CD8-positive, alpha-beta T cell (primary cell): ENCODE measurements at regions of chr5 and their contacts with region 1.

Region 1: DNA sequence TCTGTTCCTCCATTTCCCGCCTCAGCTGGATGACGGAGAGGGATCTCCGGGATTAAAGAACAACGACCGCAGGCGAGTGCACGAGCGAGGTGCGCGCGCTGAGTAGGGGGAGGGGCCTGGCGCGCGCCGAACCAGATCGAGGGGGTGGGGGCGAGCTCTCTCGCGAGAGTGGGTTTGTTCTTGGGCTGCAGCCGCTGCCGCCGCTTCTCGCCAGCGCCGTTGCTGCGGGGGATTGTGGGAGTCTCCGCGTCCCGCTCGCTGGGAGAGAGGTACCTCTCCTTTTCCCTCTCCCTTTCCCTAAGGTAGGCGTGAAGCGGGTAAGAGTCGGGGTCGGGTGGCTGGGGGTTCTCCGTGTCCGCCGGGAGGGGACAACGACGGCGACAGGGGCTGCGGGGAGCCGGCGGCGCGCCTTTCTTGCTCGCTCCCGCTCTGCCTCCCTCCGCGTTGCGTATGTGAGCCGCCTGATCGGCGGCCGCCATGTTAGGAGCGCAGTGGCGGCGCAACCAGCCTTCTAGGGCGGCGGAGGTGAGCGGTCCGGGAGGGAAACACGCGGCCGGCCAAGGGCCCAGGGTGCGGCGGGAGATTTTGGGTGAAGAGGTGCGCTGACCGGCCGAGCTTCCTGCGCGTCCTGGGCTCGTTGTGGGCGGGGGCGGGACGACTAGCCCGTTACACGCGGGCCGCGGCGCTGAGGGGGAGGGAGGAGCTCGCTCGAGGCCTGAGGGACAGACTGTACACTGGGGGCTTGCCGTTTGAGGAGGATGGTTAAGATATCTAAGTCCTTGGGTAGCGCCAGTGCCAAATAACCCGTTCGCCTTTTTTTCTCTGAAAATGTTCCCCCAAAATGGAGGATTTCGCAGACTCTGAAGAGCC is at the start of gene MATR3:
- DNase-seq: peak; percentile 88 to 95 (median 93)
- ATAC-seq: peak; percentile 90
- H3K4me3 ChIP-seq: peak within 1 kb of the TSS; percentile 72 to 94
- H3K4me3 Mint-ChIP-seq: peak within 1 kb of the TSS; percentile 98
- H3K27ac ChIP-seq: peak within 1 kb of the TSS; percentile 98
- H3K27ac Mint-ChIP-seq: peak within 1 kb of the TSS; percentile 98
- H3K4me1 ChIP-seq: peaks cover 34% of the 10 kb centered on the region
- H3K4me1 Mint-ChIP-seq: peaks cover 41% of the 10 kb centered on the region
- H3K27me3 ChIP-seq: no peaks in the 10 kb centered on the region
- H3K27me3 Mint-ChIP-seq: no peaks in the 10 kb centered on the region
- CTCF ChIP-seq: no peak
- total RNA-seq, gene MATR3: 420 to 430 TPM

Region 2: GRCh38 chr5:138331449-138332368 is 962.0 kb before region 1 on chr5 and contains the start of gene CDC25C:
- CTCF ChIA-PET with region 1: no interaction called
- POLR2A ChIA-PET with region 1: no interaction called
- intact Hi-C with region 1: loop called in 1 of 2 experiments (anchors 10 kb)
- DNase-seq: peak; percentile 91 to 99 (median 95)
- ATAC-seq: peak; percentile 100
- H3K4me3 ChIP-seq: peak within 1 kb of the TSS; percentile 52 to 69
- H3K4me3 Mint-ChIP-seq: peak within 1 kb of the TSS; percentile 86
- H3K27ac ChIP-seq: peak within 1 kb of the TSS in 1 of 2 experiments; percentile 58
- H3K27ac Mint-ChIP-seq: peak within 1 kb of the TSS; percentile 45
- H3K4me1 ChIP-seq: peaks cover 5% of the 10 kb centered on the region
- H3K4me1 Mint-ChIP-seq: peaks cover 16% of the 10 kb centered on the region
- H3K27me3 ChIP-seq: no peaks in the 10 kb centered on the region
- H3K27me3 Mint-ChIP-seq: no peaks in the 10 kb centered on the region
- CTCF ChIP-seq: no peak
- total RNA-seq, gene CDC25C: not detected

Region 3: GRCh38 chr5:139273572-139274289 is 20.0 kb before region 1 on chr5:
- CTCF ChIA-PET with region 1: interaction called, 4 read pairs
- POLR2A ChIA-PET with region 1: interaction called, 39 read pairs
- intact Hi-C with region 1: loop called (anchors 1 kb)
- DNase-seq: peak; percentile 73 to 91 (median 83)
- ATAC-seq: peak; percentile 90
- H3K4me3 ChIP-seq: peak overlapping the region; percentile 81 to 86
- H3K4me3 Mint-ChIP-seq: peak overlapping the region; percentile 88
- H3K27ac ChIP-seq: peak overlapping the region; percentile 56 to 57
- H3K27ac Mint-ChIP-seq: peak overlapping the region; percentile 72
- H3K4me1 ChIP-seq: peaks cover 36% of the 10 kb centered on the region
- H3K4me1 Mint-ChIP-seq: peaks cover 50% of the 10 kb centered on the region
- H3K27me3 ChIP-seq: no peaks in the 10 kb centered on the region
- H3K27me3 Mint-ChIP-seq: no peaks in the 10 kb centered on the region
- CTCF ChIP-seq: no peak

Region 4: DNA sequence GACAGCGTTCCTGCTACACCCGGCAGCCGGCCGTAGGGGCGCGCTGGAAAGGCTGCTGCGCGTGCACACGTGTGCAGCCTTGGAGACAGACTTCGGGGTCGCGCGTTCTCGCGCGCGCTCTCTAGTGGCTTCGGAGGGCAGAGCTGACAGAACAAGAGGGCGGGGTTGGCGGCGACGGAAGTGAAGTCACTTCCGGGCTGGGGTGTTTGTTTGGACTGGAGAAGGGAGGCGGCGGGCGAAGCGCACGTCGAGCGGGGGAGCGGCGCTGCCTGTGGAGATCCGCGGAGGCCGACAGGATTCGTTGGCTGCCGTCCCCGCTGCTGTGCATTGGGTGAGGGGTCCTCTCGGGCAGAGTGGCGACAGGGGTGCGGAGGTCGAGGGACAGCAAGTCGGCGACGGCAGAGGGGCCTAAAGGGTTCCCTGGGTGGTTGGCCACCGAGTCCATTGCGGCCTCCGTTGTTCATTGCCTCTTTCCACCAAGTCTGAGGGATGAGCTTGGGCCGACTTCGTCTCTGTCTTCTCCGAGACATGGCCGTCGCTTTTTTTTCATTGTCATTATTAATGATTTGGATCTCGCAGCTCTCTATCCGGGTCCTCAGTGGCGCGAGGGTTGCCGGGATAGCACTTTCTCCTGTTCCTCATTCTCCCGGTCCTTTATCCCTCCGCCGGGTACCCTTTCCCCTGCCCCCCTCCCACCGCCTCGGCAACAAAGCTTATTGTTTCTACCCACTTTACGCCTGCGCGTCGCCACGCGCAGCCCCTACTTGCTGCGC is 48.1 kb after region 1 on chr5 and contains the start of gene PAIP2:
- CTCF ChIA-PET with region 1: interaction called, 11 read pairs
- POLR2A ChIA-PET with region 1: interaction called, 75 read pairs
- intact Hi-C with region 1: loop called (anchors 1 kb)
- DNase-seq: peak; percentile 96 to 99 (median 98)
- ATAC-seq: peak; percentile 79
- H3K4me3 ChIP-seq: peak within 1 kb of the TSS; percentile 92 to 100
- H3K4me3 Mint-ChIP-seq: peak within 1 kb of the TSS; percentile 99
- H3K27ac ChIP-seq: peak within 1 kb of the TSS; percentile 100
- H3K27ac Mint-ChIP-seq: peak within 1 kb of the TSS; percentile 100
- H3K4me1 ChIP-seq: peaks cover 36% of the 10 kb centered on the region
- H3K4me1 Mint-ChIP-seq: peaks cover 48% of the 10 kb centered on the region
- H3K27me3 ChIP-seq: no peaks in the 10 kb centered on the region
- H3K27me3 Mint-ChIP-seq: no peaks in the 10 kb centered on the region
- CTCF ChIP-seq: peak; percentile 68
- total RNA-seq, gene PAIP2: 173 to 179 TPM

Region 5: DNA sequence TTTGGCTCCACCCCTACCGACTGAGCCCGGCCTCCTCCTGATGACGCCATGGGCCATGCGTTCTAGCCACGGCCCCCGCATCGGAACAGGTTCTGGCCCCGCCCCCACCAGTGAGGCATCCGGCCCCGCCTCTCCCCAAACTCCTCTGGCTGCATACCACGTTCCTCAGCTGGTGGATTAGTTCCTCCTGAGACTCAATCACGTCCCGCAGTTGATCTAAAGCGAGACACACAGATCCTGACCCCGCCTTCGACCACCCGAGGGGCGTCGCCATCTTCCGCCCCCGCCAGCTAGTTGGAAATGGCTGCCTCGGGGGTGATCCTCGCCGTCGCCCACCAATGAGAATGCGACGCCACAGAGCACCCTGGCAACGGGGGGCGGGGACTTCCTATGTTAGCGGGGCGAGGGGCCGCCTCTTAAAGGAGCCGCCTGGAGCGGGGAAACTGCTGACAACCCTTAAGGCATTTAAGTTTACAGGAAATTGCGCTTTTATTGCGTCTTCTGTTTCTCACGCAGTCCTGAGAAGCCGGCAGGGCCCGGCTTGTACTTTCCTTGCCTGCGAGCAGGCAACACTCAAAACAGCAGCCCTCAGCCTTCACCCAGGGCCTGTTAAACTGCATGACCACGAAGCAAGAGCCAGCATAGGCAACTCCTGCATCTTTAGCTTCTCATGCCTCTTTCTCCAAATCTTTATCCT is 110.2 kb after region 1 on chr5 and contains the start of gene SPATA24:
- CTCF ChIA-PET with region 1: no interaction called
- POLR2A ChIA-PET with region 1: interaction called, 14 read pairs
- intact Hi-C with region 1: loop called in 1 of 2 experiments (anchors 1 kb)
- DNase-seq: peak; percentile 93 to 99 (median 98)
- ATAC-seq: peak; percentile 88
- H3K4me3 ChIP-seq: peak within 1 kb of the TSS; percentile 61
- H3K4me3 Mint-ChIP-seq: peak within 1 kb of the TSS; percentile 95
- H3K27ac ChIP-seq: peak within 1 kb of the TSS; percentile 68 to 94
- H3K27ac Mint-ChIP-seq: peak within 1 kb of the TSS; percentile 99
- H3K4me1 ChIP-seq: peaks cover 16% of the 10 kb centered on the region
- H3K4me1 Mint-ChIP-seq: peaks cover 32% of the 10 kb centered on the region
- H3K27me3 ChIP-seq: no peaks in the 10 kb centered on the region
- H3K27me3 Mint-ChIP-seq: no peaks in the 10 kb centered on the region
- CTCF ChIP-seq: no peak
- total RNA-seq, gene SPATA24: 2.2 to 3.0 TPM

Region 6: DNA sequence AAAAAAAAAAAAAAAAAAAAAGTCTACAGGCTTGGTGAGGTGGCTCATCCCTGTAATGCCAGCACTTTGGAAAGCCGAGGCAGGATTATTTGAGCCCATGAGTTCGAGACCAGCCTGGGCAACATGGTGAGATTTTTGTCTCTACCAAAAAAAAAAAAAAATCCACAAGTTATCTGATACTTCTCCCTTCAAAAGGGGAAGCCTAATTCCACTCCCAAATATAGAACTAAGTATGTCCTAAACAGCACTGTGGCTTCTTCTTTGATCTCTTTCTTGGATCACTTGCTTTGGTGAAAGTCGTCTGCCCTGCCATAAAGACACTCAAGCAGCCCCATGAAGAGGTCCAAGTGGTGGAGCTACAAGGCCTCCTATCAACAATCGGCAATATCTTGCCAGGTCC is 207.6 kb after region 1 on chr5:
- CTCF ChIA-PET with region 1: no interaction called
- POLR2A ChIA-PET with region 1: no interaction called
- intact Hi-C with region 1: no loop called
- DNase-seq: no peak
- ATAC-seq: no peak
- H3K4me3 ChIP-seq: no peak overlapping the region
- H3K4me3 Mint-ChIP-seq: no peak overlapping the region
- H3K27ac ChIP-seq: no peak overlapping the region
- H3K27ac Mint-ChIP-seq: no peak overlapping the region
- H3K4me1 ChIP-seq: no peaks in the 10 kb centered on the region
- H3K4me1 Mint-ChIP-seq: no peaks in the 10 kb centered on the region
- H3K27me3 ChIP-seq: no peaks in the 10 kb centered on the region
- H3K27me3 Mint-ChIP-seq: peaks cover 4% of the 10 kb centered on the region
- CTCF ChIP-seq: no peak

Region 7: GRCh38 chr5:139711067-139711905 is 417.5 kb after region 1 on chr5:
- CTCF ChIA-PET with region 1: no interaction called
- POLR2A ChIA-PET with region 1: no interaction called
- intact Hi-C with region 1: no loop called
- DNase-seq: peak; percentile 32 to 90 (median 71)
- ATAC-seq: peak; percentile 60
- H3K4me3 ChIP-seq: peak overlapping the region; percentile 63 to 64
- H3K4me3 Mint-ChIP-seq: peak overlapping the region; percentile 77
- H3K27ac ChIP-seq: peak overlapping the region; percentile 66 to 84
- H3K27ac Mint-ChIP-seq: no peak overlapping the region
- H3K4me1 ChIP-seq: peaks cover 28% of the 10 kb centered on the region
- H3K4me1 Mint-ChIP-seq: peaks cover 39% of the 10 kb centered on the region
- H3K27me3 ChIP-seq: no peaks in the 10 kb centered on the region
- H3K27me3 Mint-ChIP-seq: no peaks in the 10 kb centered on the region
- CTCF ChIP-seq: no peak

Region 8: DNA sequence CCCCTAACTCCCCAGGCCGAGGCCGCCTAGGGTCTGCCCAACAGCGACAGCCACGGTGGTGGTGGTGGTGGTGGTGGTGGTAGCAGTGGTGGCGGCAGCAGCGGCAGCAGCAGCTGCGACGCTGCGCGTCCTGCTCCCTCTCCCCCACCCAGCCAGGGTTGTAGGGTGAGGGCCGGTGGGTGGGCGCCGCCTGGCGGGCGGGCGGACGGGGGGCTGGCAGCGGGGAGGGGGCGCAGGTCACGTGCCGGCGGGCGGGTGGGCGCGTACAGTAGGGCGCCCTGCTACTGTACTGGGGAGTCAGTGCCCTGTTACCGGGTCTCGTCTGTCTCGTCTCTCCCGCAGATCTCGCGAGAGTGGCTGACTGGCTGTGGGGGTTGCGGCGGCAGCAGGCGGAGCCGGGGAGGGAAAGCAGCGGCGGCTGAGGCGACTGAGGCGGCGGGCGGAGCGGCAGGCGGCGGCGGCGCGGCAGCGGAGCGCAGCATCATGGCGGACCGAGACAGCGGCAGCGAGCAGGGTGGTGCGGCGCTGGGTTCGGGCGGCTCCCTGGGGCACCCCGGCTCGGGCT is 820.0 kb after region 1 on chr5 and contains the start of gene PURA:
- CTCF ChIA-PET with region 1: no interaction called
- POLR2A ChIA-PET with region 1: no interaction called
- intact Hi-C with region 1: loop called in 1 of 2 experiments (anchors 10 kb)
- DNase-seq: peak; percentile 93 to 98 (median 98)
- ATAC-seq: peak; percentile 91
- H3K4me3 ChIP-seq: peak within 1 kb of the TSS; percentile 74 to 88
- H3K4me3 Mint-ChIP-seq: peak within 1 kb of the TSS; percentile 91
- H3K27ac ChIP-seq: peak within 1 kb of the TSS; percentile 82 to 84
- H3K27ac Mint-ChIP-seq: peak within 1 kb of the TSS; percentile 95
- H3K4me1 ChIP-seq: peaks cover 69% of the 10 kb centered on the region
- H3K4me1 Mint-ChIP-seq: peaks cover 77% of the 10 kb centered on the region
- H3K27me3 ChIP-seq: no peaks in the 10 kb centered on the region
- H3K27me3 Mint-ChIP-seq: peaks cover 12% of the 10 kb centered on the region
- CTCF ChIP-seq: no peak
- total RNA-seq, gene PURA: 4.0 to 4.3 TPM